Activated T-helper 1 cell treated with anti-CD3 and anti-CD28 coated beads, Interleukin-12 subunit alpha, Interleukin-12 subunit beta, Interleukin-2, Interleukin-4 antibody, amounts not matched to agents 30 ng/mL and 10 ng/mL and 1 ng/mL, durations not matched to agents 14 hours and 24 hours and 36 hours (primary cell): ENCODE measurements at regions of chr10 and their contacts with region 1.

Region 1: GRCh38 chr10:103096153-103096552 is 96.9 kb downstream of the NT5C2 start:
- DNase-seq: no peak
- H3K4me3 Mint-ChIP-seq: no peak overlapping the region
- H3K27ac Mint-ChIP-seq: no peak overlapping the region
- H3K4me1 Mint-ChIP-seq: no peaks in the 10 kb centered on the region
- H3K27me3 Mint-ChIP-seq: no peaks in the 10 kb centered on the region

Region 2: GRCh38 chr10:103244663-103245271 is 148.6 kb after region 1 on chr10:
- intact Hi-C with region 1: loop called (anchors 5 kb)
- DNase-seq: peak; percentile 50
- H3K4me3 Mint-ChIP-seq: no peak overlapping the region
- H3K27ac Mint-ChIP-seq: no peak overlapping the region
- H3K4me1 Mint-ChIP-seq: peaks cover 31% of the 10 kb centered on the region
- H3K27me3 Mint-ChIP-seq: peaks cover 6% of the 10 kb centered on the region